Adrenal gland (tissue), 19 donors: ENCODE measurements at regions of chr15 and their contacts with region 1.

Region 1: GRCh38 chr15:66851226-66852071 is 149.4 kb downstream of the SMAD6 start:
- DNase-seq: peak; percentile 82 to 93 (median 91)
- H3K4me3 ChIP-seq: no peak overlapping the region
- H3K27ac ChIP-seq: peak overlapping the region in 1 of 5 donors; percentile 18
- H3K4me1 ChIP-seq: peaks cover 0 to 8% of the 10 kb centered on the region in 2 donors
- H3K27me3 ChIP-seq: no peaks in the 10 kb centered on the region
- CTCF ChIP-seq: peak; percentile 94 to 98 (median 96)
- POLR2A ChIP-seq: no peak

Region 2: GRCh38 chr15:66603301-66604179 is 247.9 kb before region 1 on chr15:
- intact Hi-C with region 1: loop called (anchors 5 kb)
- DNase-seq: peak; percentile 40 to 68 (median 56)
- H3K4me3 ChIP-seq: no peak overlapping the region
- H3K27ac ChIP-seq: no peak overlapping the region
- H3K4me1 ChIP-seq: no peaks in the 10 kb centered on the region
- H3K27me3 ChIP-seq: no peaks in the 10 kb centered on the region
- CTCF ChIP-seq: peak; percentile 46 to 72 (median 62)
- POLR2A ChIP-seq: no peak

Region 3: DNA sequence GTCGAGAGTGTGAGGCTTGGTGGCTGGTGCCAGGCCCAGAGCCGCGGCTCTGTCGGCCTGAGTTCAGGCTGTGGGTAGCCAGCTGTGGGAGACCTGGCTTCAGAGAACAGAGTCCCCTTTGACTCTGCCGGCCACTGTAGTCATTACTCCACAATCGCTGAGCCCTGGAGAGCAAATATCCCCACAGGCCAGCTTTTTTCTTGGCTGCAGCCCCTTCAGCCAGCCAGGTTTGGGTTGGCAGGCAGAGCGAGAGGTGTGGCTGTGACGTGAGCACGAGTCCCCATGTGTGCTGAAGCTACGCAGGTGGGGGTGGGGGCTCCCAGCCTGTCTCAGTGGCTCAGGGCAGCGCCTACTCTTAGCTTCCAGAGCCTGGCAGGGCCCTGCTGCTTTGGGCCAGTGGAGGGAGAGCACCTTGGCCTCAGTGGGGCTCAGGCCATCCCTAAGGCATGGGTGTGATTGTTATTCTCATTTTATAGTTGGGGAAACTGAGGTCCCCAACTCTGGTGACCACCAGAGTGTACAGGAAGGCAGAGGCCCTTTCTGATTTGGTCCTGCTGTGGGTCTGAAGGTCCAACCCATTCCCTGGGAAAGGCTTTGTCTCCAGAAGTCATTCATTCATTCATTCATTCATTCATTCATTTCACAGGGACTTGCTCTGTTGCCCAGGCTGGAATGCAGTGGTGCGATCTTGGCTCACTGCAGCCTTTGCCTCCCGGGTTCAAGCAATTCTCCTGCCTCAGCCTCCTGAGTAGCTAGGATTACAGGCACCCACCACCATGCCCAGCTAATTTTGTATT is 240.0 kb before region 1 on chr15:
- intact Hi-C with region 1: loop called in 1 of 2 experiments (anchors 5 kb)
- DNase-seq: no peak
- H3K4me3 ChIP-seq: no peak overlapping the region
- H3K27ac ChIP-seq: no peak overlapping the region
- H3K4me1 ChIP-seq: no peaks in the 10 kb centered on the region
- H3K27me3 ChIP-seq: no peaks in the 10 kb centered on the region
- CTCF ChIP-seq: no peak
- POLR2A ChIP-seq: no peak

Region 4: GRCh38 chr15:66619151-66619903 is 232.1 kb before region 1 on chr15:
- intact Hi-C with region 1: loop called (anchors 5 kb)
- DNase-seq: peak; percentile 74 to 89 (median 83)
- H3K4me3 ChIP-seq: no peak overlapping the region
- H3K27ac ChIP-seq: peak overlapping the region in 1 of 5 donors; percentile 7
- H3K4me1 ChIP-seq: peaks cover 0 to 13% of the 10 kb centered on the region in 2 donors
- H3K27me3 ChIP-seq: peaks cover 13% of the 10 kb centered on the region
- CTCF ChIP-seq: peak; percentile 77 to 89 (median 84)
- POLR2A ChIP-seq: no peak

Region 5: DNA sequence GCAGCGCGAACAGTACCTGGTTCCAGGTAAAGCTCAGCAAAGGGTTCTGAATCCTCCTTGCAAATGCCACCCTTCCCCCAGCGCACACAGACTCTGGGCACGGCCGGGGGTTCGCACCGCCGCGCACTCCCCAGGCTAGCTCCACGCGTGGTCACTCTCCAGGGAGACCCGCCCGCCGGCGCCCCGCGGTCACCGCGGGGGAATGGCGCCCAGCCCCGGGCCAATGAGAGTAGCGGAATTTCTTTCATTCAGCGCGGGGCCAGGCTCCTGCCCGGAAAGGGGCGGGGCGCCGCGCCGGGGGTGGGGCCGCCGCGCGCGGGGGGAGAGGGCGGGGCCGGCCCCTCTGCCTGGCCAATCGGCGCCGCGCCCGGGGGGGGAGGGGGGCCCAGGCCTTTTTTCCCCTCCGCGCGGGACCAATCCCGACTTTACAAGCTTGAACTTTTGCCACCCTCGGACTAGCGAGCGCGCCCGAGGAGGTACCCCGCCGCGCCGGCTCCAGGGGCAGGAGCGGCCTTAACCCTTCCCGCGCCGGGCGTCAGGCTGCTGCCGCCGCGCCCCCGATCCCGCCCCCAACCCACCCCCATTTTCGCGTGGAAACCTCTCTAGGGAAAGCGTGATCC is 150.5 kb before region 1 on chr15:
- intact Hi-C with region 1: loop called (anchors 10 kb)
- DNase-seq: peak; percentile 96 to 98 (median 97)
- H3K4me3 ChIP-seq: peak overlapping the region in 3 of 4 donors; percentile 19 to 67 (median 58)
- H3K27ac ChIP-seq: peak overlapping the region in 4 of 5 donors; percentile 42 to 90 (median 61)
- H3K4me1 ChIP-seq: peaks cover 4 to 19% of the 10 kb centered on the region in 2 donors
- H3K27me3 ChIP-seq: no peaks in the 10 kb centered on the region
- CTCF ChIP-seq: no peak
- POLR2A ChIP-seq: peak in 1 of 2 donors; percentile 23

Region 6: DNA sequence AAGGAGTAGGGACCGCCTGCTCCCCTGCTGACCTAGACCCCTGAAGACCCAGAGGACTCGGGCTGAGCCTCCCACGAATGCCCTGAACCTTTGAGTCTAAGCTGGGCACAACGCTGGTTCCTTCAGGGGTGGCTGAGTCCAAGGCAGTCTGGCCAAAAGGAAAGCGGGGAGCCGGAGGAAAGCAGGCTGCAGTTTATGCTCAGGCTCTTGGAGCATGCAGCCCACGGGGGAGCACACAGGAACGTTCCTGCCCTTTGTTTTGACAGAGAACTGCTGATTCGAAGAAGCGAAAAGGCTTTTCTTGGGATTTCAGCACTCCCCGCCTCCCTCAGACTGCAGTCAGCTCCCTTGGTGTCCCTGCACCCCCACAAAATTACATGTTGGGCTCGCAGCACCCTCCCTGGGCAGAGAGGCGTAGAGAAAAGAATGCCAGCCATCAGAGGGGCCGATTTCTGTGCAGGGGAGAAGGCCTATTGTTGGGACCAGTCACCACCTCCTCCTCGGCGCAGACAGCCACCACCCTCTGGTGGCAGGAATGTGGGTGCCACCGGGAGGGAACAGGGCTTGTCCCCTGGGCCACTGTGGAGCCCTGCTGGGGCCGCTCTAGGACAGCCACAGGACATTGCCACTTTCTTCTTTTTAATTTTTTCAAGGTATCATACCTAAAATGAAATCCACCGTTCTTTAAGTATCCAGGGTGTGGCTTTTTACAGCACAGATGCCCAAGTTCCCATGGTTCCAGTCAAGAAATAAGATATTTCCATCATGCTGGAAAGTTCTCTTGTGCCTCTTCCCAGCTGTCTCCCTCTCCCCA is 77.2 kb before region 1 on chr15:
- intact Hi-C with region 1: loop called (anchors 5 kb)
- DNase-seq: peak; percentile 82 to 91 (median 87)
- H3K4me3 ChIP-seq: no peak overlapping the region
- H3K27ac ChIP-seq: peak overlapping the region in 2 of 5 donors; percentile 38 to 80
- H3K4me1 ChIP-seq: peaks cover 0 to 6% of the 10 kb centered on the region in 2 donors
- H3K27me3 ChIP-seq: no peaks in the 10 kb centered on the region
- CTCF ChIP-seq: peak; percentile 89 to 99 (median 98)
- POLR2A ChIP-seq: no peak

Region 7: DNA sequence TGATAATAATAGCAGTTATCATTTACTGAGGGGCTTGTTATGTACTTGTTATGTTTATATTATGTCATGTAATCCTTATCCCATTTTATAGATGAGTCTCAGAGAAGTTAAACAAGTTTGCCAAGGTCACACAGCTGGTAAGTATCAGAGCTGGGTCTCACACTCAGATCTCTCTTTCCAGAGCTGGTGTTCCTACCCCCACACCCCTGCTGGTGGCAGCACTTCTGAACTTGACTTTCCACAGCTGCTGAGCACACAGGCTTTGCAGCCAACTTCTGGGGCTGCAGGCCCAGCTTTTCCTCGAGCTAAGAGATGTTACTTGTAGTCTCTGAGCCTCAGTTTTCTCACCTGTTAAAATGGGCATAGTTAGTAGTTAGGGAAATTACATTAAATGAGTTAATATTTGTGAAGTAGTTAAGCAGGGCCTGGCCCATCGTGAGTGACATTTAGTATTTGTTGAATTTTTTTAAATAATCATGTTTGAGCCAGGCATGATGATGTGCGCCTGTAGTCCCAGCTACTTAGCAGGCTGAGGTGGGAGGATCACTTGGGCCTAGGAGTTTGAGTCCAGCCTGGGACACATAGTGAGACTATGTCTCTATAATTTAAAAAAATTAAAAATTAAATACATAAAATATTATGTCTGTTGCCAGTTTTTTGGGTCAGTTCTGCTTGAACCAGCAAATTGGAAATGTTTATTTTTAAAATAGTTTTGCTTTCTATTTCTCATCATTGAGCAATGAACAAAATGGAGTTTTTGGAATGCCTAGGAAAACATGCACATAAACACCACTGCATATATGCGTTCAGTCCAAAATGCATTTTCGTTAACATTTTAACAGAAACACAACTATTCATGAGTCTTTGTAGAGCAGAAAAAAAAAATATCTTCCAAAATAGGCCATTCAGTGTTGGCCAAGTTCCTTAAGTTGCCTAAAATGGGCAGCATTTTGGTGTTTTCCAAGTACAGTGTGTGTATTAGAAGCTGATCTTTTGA is 62.1 kb before region 1 on chr15:
- intact Hi-C with region 1: loop called in 1 of 2 experiments (anchors 5 kb)
- DNase-seq: peak in 6 of 7 donors; percentile 41 to 65 (median 58)
- H3K4me3 ChIP-seq: no peak overlapping the region
- H3K27ac ChIP-seq: peak overlapping the region in 1 of 5 donors; percentile 34
- H3K4me1 ChIP-seq: no peaks in the 10 kb centered on the region
- H3K27me3 ChIP-seq: no peaks in the 10 kb centered on the region
- CTCF ChIP-seq: peak; percentile 22 to 55 (median 44)
- POLR2A ChIP-seq: no peak